GM12878 (cell line): ENCODE measurements at regions of chr2 and their contacts with region 1.

Region 1: DNA sequence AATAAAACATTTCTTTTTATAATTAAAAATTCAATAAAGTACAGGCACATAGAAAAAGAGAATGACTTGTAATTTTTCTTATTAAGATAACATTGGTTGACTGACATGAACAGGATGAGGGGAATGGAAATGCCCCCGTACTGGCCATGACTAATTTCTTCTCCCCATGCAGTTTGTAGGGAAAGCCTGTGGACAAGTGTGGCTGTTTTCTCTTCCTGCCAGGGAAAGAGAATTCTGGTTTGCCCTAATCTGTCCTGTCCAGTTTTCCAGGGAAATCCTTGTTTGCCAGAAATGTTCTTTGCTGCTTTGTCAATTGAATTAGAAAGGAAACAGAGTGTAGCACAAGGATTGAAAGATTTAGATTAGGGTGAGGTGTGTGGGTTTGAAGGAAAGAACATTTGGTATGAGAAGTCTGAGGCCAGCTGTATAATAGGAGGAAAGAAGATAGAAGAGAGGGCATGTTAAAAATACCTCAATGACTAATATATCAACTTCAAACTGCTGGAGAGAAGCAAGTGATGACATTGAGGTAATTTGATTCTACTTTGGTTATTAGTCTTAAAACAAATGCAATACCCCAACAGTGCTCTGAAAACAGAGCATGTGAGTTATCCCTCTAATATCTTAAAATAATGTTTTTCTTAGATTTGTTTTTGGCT is 593.9 kb upstream of the ZNF804A start:
- DNase-seq: peak; percentile 27
- ATAC-seq: peak; percentile 60
- H3K4me3 ChIP-seq: no peak overlapping the region
- H3K27ac ChIP-seq: peak overlapping the region; percentile 68; the same call in 1 of the 2 replicates
- H3K4me1 ChIP-seq: peaks cover 20% of the 10 kb centered on the region
- H3K27me3 ChIP-seq: no peaks in the 10 kb centered on the region
- CTCF ChIP-seq: no peak
- EP300 ChIP-seq: no peak
- POLR2A ChIP-seq: no peak
- RAD21 ChIP-seq: no peak

Region 2: DNA sequence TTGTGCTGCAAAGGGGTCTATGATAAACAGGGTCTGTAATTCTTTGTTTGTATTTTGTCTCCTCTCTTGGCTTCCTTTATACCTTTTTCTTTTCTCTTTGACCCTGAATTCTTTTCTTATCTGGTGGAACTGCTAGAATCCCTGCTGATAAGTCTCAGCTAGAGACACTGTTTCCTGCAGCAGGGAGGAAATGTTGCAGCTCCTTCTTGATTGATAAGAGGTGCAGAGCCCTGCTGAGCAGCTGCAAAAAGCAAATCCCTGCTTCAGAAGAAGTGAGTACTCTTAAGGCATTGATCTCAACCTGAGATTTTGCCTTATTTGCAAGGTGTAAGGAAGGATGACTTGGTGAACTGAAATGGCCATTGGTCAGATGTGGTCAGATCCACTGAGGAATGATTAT is 712.4 kb before region 1 on chr2:
- CTCF ChIA-PET with region 1: no interaction called
- POLR2A ChIA-PET with region 1: no interaction called
- RAD21 ChIA-PET with region 1: no interaction called
- SMC1A ChIA-PET with region 1: no interaction called
- in situ Hi-C with region 1: no loop called
- intact Hi-C with region 1: loop called (anchors 10 kb)
- DNase-seq: no peak
- ATAC-seq: no peak
- H3K4me3 ChIP-seq: no peak overlapping the region
- H3K27ac ChIP-seq: no peak overlapping the region
- H3K4me1 ChIP-seq: no peaks in the 10 kb centered on the region
- H3K27me3 ChIP-seq: no peaks in the 10 kb centered on the region
- CTCF ChIP-seq: no peak
- EP300 ChIP-seq: no peak
- POLR2A ChIP-seq: no peak
- RAD21 ChIP-seq: no peak

Region 3: DNA sequence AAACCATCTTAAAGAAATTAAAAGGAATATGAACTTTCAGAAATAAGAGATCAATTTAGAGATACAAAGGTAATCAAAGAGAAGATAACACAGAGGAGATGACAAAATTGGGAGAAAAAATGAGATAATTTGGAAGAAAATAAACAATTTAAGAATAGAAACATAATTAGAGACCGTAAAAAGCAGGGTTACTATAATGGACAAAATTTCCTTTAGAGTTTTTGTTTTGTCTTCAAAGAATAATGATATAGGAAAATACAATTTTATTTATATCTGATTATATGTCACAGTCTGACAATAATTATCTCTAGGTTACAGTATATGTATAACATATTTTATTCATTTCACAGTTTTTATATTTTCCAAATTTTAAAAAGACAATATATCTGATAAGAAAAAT is 122.4 kb before region 1 on chr2:
- CTCF ChIA-PET with region 1: no interaction called
- POLR2A ChIA-PET with region 1: no interaction called
- RAD21 ChIA-PET with region 1: no interaction called
- SMC1A ChIA-PET with region 1: no interaction called
- in situ Hi-C with region 1: no loop called
- intact Hi-C with region 1: no loop called
- DNase-seq: no peak
- ATAC-seq: no peak
- H3K4me3 ChIP-seq: no peak overlapping the region
- H3K27ac ChIP-seq: no peak overlapping the region
- H3K4me1 ChIP-seq: no peaks in the 10 kb centered on the region
- H3K27me3 ChIP-seq: no peaks in the 10 kb centered on the region
- CTCF ChIP-seq: no peak
- EP300 ChIP-seq: no peak
- POLR2A ChIP-seq: no peak
- RAD21 ChIP-seq: no peak

Region 4: GRCh38 chr2:184312970-184313369 is 308.6 kb after region 1 on chr2:
- CTCF ChIA-PET with region 1: no interaction called
- POLR2A ChIA-PET with region 1: no interaction called
- RAD21 ChIA-PET with region 1: no interaction called
- SMC1A ChIA-PET with region 1: no interaction called
- in situ Hi-C with region 1: no loop called
- intact Hi-C with region 1: no loop called
- DNase-seq: no peak
- ATAC-seq: no peak
- H3K4me3 ChIP-seq: no peak overlapping the region
- H3K27ac ChIP-seq: no peak overlapping the region
- H3K4me1 ChIP-seq: no peaks in the 10 kb centered on the region
- H3K27me3 ChIP-seq: no peaks in the 10 kb centered on the region
- CTCF ChIP-seq: no peak
- EP300 ChIP-seq: no peak
- POLR2A ChIP-seq: no peak
- RAD21 ChIP-seq: no peak